PC-9 (cell line): ENCODE measurements at regions of chr7 and their contacts with region 1.

Region 1: GRCh38 chr7:117605712-117606111 is 125.9 kb downstream of the CFTR start:
- DNase-seq: no peak
- H3K4me3 ChIP-seq: no peak overlapping the region
- H3K27ac ChIP-seq: no peak overlapping the region
- H3K4me1 ChIP-seq: no peaks in the 10 kb centered on the region
- H3K27me3 ChIP-seq: no peaks in the 10 kb centered on the region
- CTCF ChIP-seq: no peak

Region 2: GRCh38 chr7:117639966-117640365 is 34.3 kb after region 1 on chr7:
- CTCF ChIA-PET with region 1: no interaction called
- POLR2A ChIA-PET with region 1: no interaction called
- intact Hi-C with region 1: loop called (anchors 1 kb)
- DNase-seq: no peak
- H3K4me3 ChIP-seq: no peak overlapping the region
- H3K27ac ChIP-seq: no peak overlapping the region
- H3K4me1 ChIP-seq: no peaks in the 10 kb centered on the region
- H3K27me3 ChIP-seq: no peaks in the 10 kb centered on the region
- CTCF ChIP-seq: no peak